Activated CD4-positive, alpha-beta memory T cell treated with anti-CD3 and anti-CD28 coated beads for 36 hours (primary cell): ENCODE measurements at regions of chr14 and their contacts with region 1.

Region 1: DNA sequence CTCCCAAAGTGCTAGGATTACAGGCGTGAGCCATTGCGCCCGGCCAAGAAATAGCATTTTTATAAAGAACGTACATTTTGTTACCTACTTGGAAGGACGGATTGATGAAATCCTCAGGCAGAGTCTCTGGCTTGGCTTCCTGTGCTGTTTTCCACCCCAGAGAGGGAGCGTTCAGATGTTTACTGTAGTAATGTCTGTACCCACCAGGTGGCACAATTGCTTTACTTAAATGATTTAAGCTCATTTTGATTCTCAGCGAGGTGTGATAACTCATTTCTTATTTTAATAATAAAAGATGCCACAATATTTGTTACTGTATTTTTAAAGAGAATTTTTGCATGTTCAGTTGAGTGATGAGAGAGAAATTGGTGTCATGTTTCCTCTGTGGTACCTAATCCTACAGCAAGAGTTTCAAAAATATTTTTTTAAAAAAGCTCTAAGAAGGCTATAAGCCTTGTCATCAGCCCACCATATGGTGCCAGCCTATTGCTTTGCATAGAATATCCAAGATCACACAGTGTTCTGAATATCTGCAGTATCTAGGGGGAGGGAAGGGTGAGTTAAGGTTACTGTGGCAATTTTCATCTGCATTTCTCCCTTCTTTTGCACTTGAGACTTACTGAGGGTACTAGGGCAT is 82.6 kb upstream of the TRAF3 start:
- DNase-seq: peak; percentile 49
- H3K4me3 Mint-ChIP-seq: no peak overlapping the region
- H3K27ac Mint-ChIP-seq: no peak overlapping the region
- H3K4me1 Mint-ChIP-seq: peaks cover 18% of the 10 kb centered on the region
- H3K27me3 Mint-ChIP-seq: no peaks in the 10 kb centered on the region

Region 2: GRCh38 chr14:102063091-102063802 is 631.4 kb before region 1 on chr14:
- CTCF ChIA-PET with region 1: no interaction called
- POLR2A ChIA-PET with region 1: no interaction called
- intact Hi-C with region 1: no loop called
- DNase-seq: peak; percentile 79
- H3K4me3 Mint-ChIP-seq: no peak overlapping the region
- H3K27ac Mint-ChIP-seq: no peak overlapping the region
- H3K4me1 Mint-ChIP-seq: peaks cover under 1% of the 10 kb centered on the region
- H3K27me3 Mint-ChIP-seq: no peaks in the 10 kb centered on the region

Region 3: DNA sequence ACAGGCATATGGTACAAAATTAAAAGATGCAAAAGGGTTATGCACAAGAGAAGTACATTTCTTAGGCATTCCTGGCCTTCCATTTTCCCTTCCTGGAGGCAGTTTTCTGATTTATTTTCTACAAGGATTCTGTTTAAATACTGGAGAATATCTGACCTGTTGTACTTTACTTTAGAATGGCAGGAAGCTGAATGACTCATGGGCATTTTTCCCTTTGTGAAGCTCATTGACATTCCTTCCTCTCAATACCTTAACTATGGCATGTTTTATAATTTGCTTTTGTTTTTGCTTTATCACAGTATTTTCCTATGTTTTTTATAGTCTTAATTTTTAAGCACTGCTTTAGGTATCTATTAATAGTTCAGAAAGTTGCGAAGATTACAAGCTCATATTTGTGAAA is 39.5 kb before region 1 on chr14:
- CTCF ChIA-PET with region 1: interaction called, 12 read pairs
- POLR2A ChIA-PET with region 1: no interaction called
- intact Hi-C with region 1: no loop called
- DNase-seq: no peak
- H3K4me3 Mint-ChIP-seq: no peak overlapping the region
- H3K27ac Mint-ChIP-seq: no peak overlapping the region
- H3K4me1 Mint-ChIP-seq: peaks cover 20% of the 10 kb centered on the region
- H3K27me3 Mint-ChIP-seq: no peaks in the 10 kb centered on the region

Region 4: DNA sequence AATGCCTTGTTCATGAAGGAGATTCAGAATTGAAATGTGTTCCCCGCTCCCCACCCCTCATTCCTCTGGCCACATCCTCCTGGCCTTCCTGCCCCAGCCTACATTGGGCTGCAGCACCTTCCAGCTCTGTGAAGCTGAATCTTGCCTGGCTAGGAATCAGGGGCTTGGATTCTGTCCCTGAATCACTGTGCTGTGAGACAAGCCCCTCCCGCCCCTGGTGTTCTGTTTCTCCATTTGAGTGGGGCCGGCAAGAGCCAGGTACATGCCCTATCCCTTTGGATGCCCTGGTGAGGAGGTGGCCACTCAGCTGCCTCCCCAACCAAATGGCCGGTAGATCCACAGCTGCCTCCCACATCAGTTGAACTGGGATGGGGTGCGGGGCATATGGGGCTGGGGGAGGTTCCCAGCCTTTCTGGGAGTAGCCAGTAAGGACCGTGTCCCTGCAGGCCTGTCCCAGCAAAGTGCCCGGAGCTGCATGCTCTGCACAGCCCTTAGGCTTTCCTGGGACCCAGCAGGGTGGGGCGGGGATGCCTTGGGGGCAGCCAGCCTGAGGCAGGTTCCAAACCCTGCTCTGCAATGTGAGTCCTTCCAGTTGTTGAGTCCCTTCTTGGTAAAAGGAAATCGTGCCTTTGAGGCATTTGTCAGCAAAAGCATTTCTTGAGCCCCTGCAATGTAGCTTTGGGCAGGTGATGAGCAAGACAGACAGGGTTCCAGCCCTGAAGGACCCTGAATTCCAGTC is 44.3 kb after region 1 on chr14:
- CTCF ChIA-PET with region 1: no interaction called
- POLR2A ChIA-PET with region 1: no interaction called
- intact Hi-C with region 1: no loop called
- DNase-seq: no peak
- H3K4me3 Mint-ChIP-seq: no peak overlapping the region
- H3K27ac Mint-ChIP-seq: no peak overlapping the region
- H3K4me1 Mint-ChIP-seq: no peaks in the 10 kb centered on the region
- H3K27me3 Mint-ChIP-seq: no peaks in the 10 kb centered on the region

Region 5: GRCh38 chr14:102759456-102760187 is 65.0 kb after region 1 on chr14:
- CTCF ChIA-PET with region 1: interaction called, 10 read pairs
- POLR2A ChIA-PET with region 1: no interaction called
- intact Hi-C with region 1: no loop called
- DNase-seq: no peak
- H3K4me3 Mint-ChIP-seq: no peak overlapping the region
- H3K27ac Mint-ChIP-seq: no peak overlapping the region
- H3K4me1 Mint-ChIP-seq: peaks cover under 1% of the 10 kb centered on the region
- H3K27me3 Mint-ChIP-seq: peaks cover 7% of the 10 kb centered on the region

Region 6: GRCh38 chr14:102917469-102918211 is 223.0 kb after region 1 on chr14:
- CTCF ChIA-PET with region 1: interaction called, 49 read pairs
- POLR2A ChIA-PET with region 1: interaction called, 3 read pairs
- intact Hi-C with region 1: loop called (anchors 1 kb)
- DNase-seq: peak; percentile 76
- H3K4me3 Mint-ChIP-seq: no peak overlapping the region
- H3K27ac Mint-ChIP-seq: no peak overlapping the region
- H3K4me1 Mint-ChIP-seq: no peaks in the 10 kb centered on the region
- H3K27me3 Mint-ChIP-seq: peaks cover 1% of the 10 kb centered on the region